Activated CD4-positive, alpha-beta memory T cell treated with anti-CD3 and anti-CD28 coated beads, Interleukin-2, amount 10 ng/mL, durations not matched to agents 7 days and 5 days (primary cell): ENCODE measurements at regions of chr1 and their contacts with region 1.

Region 1: DNA sequence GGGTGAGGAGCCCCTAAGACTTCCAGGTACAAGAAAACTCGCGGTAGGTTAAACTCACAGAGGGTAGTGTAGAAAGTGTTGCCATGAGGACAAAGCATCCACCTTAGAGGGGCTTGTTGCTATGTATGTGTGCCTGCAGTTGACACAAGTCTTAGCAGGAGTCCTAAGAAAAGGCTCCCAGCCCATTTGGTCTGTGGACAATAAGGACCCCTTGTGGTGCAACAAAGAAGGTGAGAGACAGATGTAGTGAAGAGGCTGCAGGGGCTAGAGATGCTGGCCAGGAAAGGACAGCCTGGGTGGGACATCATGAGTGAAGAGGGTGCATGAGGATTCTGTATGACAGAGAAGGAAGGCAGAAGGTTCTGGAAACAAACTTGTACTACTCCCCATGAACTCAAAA is 36.3 kb upstream of the IL10 start:
- DNase-seq: peak; percentile 62
- H3K4me3 Mint-ChIP-seq: no peak overlapping the region
- H3K27ac Mint-ChIP-seq: no peak overlapping the region
- H3K4me1 Mint-ChIP-seq: peaks cover 53% of the 10 kb centered on the region
- H3K27me3 Mint-ChIP-seq: no peaks in the 10 kb centered on the region

Region 2: DNA sequence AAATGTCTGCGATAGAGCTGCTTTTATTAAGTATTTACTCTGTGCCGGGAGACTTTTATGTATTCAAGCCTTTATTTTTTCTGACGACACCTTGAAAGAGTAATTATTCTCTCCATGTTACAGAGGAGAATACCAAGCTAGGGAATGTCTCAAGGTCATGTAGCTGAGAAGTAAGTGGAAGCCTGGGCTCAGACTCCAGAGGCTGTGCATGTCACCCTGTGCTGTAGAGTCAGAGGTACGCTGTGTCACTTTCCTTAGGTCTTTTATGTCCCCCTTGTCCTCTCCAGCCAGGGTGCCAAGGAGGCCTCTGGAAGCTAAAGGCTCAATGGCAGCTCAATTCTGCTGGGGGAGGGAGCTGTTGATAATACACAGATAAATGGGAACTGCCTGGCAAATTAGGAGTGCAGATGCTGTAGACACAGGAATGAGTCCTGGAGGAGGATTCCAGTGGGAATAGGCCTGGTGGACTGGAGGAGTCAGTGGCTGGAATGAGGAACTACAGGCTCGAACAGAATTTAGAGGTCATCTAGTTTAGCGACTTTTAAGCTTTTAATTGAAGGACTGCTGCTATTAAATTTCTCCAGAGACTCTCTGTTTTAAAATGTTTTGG is 47.4 kb before region 1 on chr1:
- CTCF ChIA-PET with region 1: interaction called, 39 read pairs
- POLR2A ChIA-PET with region 1: interaction called, 72 read pairs
- DNase-seq: no peak
- H3K4me3 Mint-ChIP-seq: no peak overlapping the region
- H3K27ac Mint-ChIP-seq: no peak overlapping the region
- H3K4me1 Mint-ChIP-seq: peaks cover 38% of the 10 kb centered on the region
- H3K27me3 Mint-ChIP-seq: peaks cover 19% of the 10 kb centered on the region

Region 3: DNA sequence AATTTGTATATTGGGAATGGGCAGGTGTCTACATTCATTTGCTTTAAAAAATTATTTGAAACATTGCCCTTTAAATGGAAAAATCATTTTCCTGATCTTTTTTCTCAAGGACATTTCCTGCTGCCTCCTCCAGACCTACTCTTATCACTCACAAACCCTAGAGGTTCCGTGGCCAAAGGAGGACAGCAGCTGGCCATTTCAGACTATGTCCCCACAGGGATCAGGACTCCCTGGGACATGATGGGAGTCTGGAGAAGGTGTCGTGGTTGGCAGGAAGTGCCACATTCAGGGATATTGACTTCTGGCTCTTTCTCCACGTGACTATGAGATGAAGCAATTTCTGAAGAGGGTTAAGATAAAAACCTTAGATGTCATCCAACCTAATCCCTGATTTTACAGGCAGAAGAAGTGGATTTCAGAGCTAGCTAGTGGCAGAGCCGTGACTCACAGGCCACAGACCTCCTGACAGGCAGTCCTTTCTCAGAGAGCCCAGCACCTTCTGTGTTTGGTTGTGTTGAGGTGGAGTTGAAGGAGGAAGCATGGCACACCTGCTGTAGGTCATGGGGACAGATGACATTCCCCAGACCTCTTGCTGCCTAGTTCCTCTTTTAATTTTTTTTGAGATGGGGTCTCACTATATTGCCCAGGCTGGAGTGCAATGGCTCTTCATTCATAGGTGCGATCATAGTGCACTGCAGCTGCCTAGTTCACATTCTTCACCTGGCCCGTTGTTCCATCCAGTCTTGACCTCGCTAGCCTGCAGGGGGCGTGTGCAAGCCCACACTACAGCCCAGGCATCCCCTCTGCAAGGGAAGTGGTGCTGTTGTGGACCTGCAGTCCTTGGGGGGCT is 10.9 kb before region 1 on chr1:
- CTCF ChIA-PET with region 1: interaction called, 14 read pairs
- POLR2A ChIA-PET with region 1: interaction called, 7 read pairs
- DNase-seq: peak; percentile 45
- H3K4me3 Mint-ChIP-seq: no peak overlapping the region
- H3K27ac Mint-ChIP-seq: no peak overlapping the region
- H3K4me1 Mint-ChIP-seq: peaks cover 64% of the 10 kb centered on the region
- H3K27me3 Mint-ChIP-seq: peaks cover 38% of the 10 kb centered on the region

Region 4: GRCh38 chr1:206843645-206844044 is 35.0 kb after region 1 on chr1:
- CTCF ChIA-PET with region 1: no interaction called
- POLR2A ChIA-PET with region 1: no interaction called
- DNase-seq: no peak
- H3K4me3 Mint-ChIP-seq: no peak overlapping the region
- H3K27ac Mint-ChIP-seq: no peak overlapping the region
- H3K4me1 Mint-ChIP-seq: no peaks in the 10 kb centered on the region
- H3K27me3 Mint-ChIP-seq: peaks cover 15% of the 10 kb centered on the region

Region 5: GRCh38 chr1:206955476-206956451 is 147.1 kb after region 1 on chr1:
- CTCF ChIA-PET with region 1: no interaction called
- POLR2A ChIA-PET with region 1: no interaction called
- DNase-seq: no peak
- H3K4me3 Mint-ChIP-seq: no peak overlapping the region
- H3K27ac Mint-ChIP-seq: no peak overlapping the region
- H3K4me1 Mint-ChIP-seq: peaks cover 15% of the 10 kb centered on the region
- H3K27me3 Mint-ChIP-seq: no peaks in the 10 kb centered on the region

Region 6: GRCh38 chr1:206982216-206982615 is 173.6 kb after region 1 on chr1:
- CTCF ChIA-PET with region 1: interaction called, 37 read pairs
- POLR2A ChIA-PET with region 1: interaction called, 4 read pairs
- DNase-seq: peak; percentile 70
- H3K4me3 Mint-ChIP-seq: no peak overlapping the region
- H3K27ac Mint-ChIP-seq: no peak overlapping the region
- H3K4me1 Mint-ChIP-seq: no peaks in the 10 kb centered on the region
- H3K27me3 Mint-ChIP-seq: peaks cover 47% of the 10 kb centered on the region

Region 7: DNA sequence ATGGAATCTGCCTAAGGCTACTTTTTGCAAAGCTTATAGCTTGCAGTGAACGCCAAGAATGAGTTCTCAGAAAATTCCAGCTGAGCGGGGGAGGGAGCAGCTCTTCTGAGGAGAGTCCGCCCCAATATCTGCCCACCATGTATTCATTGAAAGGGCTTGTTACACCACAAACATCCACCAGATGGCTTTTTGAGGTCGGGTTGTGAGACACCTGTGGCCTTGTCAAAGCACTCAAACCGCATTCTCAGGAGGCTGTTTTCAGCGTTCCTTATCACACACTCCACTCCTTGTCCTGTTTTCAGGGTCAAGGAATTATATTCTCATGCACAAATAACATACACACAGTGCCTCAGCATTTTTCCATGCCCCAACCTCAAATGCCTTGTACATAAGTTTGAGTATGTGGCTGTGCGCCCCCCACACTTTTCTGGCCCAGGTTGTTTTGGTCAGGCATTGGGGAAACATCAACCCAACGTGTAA is 276.1 kb after region 1 on chr1:
- CTCF ChIA-PET with region 1: no interaction called
- POLR2A ChIA-PET with region 1: no interaction called
- DNase-seq: peak; percentile 59
- H3K4me3 Mint-ChIP-seq: no peak overlapping the region
- H3K27ac Mint-ChIP-seq: no peak overlapping the region
- H3K4me1 Mint-ChIP-seq: peaks cover 18% of the 10 kb centered on the region
- H3K27me3 Mint-ChIP-seq: peaks cover 45% of the 10 kb centered on the region